Heart right ventricle (tissue), 16 donors: ENCODE measurements at regions of chr21 and their contacts with region 1.

Region 1: DNA sequence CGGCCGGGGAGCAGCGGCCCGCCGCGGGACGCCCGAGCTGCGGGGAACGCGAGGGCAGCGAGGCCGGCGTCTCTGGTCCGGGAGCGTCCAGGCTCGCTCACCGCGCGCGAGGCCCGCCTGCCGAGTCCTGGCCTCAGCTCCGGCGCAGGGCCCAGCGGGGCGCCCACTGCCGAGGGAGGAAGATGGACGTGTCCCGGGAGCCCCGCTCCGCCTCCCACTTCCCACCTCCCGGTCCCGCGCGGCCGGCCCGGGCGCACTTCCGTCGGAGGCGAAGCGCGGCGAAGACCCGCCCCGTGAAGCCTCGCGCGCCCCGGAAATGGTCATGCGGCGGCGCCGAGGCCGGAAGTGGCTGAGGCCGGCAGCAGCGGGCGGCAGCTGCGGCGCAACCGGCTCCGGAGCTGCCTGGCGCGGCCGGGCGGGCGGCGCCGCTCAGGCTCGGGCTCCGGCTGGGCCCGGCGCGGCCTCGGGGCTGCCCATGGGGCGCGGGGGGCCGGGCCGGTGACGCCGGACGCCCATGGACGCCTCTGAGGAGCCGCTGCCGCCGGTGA is at the start of gene TRAPPC10:
- DNase-seq: peak; percentile 85 to 88
- ATAC-seq: peak; percentile 91 to 95 (median 94)
- H3K4me3 ChIP-seq: peak within 1 kb of the TSS; percentile 80 to 99 (median 96)
- H3K27ac ChIP-seq: peak within 1 kb of the TSS; percentile 89 to 99 (median 98)
- H3K4me1 ChIP-seq: peaks cover 5 to 50% (median 30%) of the 10 kb centered on the region in 9 donors
- H3K27me3 ChIP-seq: no peaks in the 10 kb centered on the region
- CTCF ChIP-seq: no peak
- total RNA-seq, gene TRAPPC10: 18.7 to 26.2 (median 20.3) TPM

Region 2: DNA sequence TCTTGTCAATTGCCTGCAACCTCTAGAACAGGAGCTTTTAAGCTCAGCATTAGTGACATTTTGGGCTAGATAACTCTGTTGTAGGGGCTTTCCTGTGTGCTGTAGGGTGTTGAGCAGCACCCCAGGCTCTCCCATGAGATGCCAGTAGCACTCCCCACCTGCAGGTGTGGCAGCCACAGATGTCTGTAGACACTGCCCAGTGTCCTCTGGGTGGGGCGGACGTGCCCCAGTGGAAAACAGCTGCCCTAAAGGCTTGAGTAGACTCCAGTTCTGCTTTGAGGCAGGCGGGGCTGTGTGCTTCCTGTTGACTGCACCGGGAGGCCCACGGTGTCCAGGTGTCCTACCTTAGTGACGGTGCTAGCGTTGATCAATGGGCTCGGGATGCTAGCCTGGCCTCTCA is 78.3 kb after region 1 on chr21:
- intact Hi-C with region 1: loop called in 1 of 10 experiments (anchors 10 kb)
- DNase-seq: no peak
- ATAC-seq: no peak
- H3K4me3 ChIP-seq: no peak overlapping the region
- H3K27ac ChIP-seq: peak overlapping the region in 1 of 10 donors; percentile 89
- H3K4me1 ChIP-seq: peaks cover 16 to 53% (median 35%) of the 10 kb centered on the region in 9 donors
- H3K27me3 ChIP-seq: no peaks in the 10 kb centered on the region
- CTCF ChIP-seq: no peak

Region 3: DNA sequence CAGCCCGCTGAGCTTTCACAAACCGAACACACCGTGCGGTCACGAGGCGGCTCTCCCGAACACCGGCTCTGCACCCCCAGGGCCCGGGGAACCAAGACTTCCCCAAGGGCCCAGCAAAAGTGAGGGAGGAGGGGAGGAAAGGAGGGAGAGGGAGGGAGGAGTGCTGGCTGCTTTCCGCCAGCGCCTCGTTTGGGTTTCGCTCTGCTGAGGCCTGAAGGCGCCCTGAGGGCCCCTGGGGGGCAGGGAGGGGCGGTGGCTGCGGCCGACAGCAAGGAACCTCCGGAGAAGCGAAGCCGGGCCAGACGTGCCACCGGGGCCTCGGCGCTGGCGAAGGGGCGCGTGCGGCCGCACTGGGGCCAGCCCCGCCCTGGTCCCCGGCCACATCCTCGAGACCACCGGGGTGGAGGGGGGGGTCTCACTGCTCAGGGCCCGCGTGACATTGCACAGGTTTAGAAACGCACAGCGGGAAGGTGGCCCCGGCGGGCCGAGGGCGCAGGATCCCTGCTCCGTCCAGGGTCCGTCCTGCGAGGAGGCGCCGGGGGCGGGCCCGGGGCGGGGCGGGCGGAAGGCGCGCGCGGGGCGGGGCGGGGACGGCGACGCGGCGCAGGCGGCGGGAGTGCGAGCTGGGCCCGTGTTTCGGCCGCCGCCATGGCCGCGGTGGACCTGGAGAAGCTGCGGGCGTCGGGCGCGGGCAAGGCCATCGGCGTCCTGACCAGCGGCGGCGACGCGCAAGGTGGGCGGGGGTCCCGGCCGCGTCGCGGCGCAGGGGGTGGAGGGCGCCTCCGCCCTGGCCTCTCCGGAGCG is 287.6 kb after region 1 on chr21 and contains the start of gene PFKL:
- intact Hi-C with region 1: loop called in 1 of 10 experiments (anchors 10 kb)
- DNase-seq: peak; percentile 68 to 79
- ATAC-seq: peak; percentile 45 to 80 (median 53)
- H3K4me3 ChIP-seq: peak within 1 kb of the TSS; percentile 56 to 92 (median 78)
- H3K27ac ChIP-seq: peak within 1 kb of the TSS; percentile 83 to 98 (median 94)
- H3K4me1 ChIP-seq: peaks cover 42 to 73% (median 63%) of the 10 kb centered on the region in 9 donors
- H3K27me3 ChIP-seq: no peaks in the 10 kb centered on the region
- CTCF ChIP-seq: no peak
- total RNA-seq, gene PFKL: 34.7 to 84.4 (median 43.8) TPM

Region 4: DNA sequence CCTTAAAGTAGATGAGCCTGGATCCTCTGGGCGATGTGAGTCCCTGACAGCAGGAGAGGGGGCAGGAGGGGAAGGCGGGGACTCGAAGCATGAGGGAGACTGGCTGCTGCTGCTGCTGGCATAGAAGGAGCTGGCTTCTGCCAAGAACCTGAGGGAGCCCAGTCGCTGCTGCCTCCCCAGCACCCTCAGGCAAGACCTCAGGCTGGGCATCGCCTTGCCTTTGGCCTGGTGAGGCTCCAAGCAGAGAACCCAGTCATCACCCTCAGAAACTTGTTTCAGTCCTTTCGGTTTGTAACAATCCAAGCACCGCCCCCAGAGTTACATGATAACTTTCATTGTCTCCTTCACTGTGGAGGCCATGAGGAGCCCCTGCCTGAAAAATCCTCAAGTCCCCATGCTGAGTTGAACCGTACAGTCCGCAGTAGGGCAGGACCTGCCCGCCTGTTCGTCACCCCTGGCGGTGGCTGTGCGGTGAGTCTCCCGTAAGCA is 1236.9 kb after region 1 on chr21:
- intact Hi-C with region 1: no loop called
- DNase-seq: no peak
- ATAC-seq: peak; percentile 38 to 73 (median 58)
- H3K4me3 ChIP-seq: peak overlapping the region in 7 of 10 donors; percentile 17 to 39 (median 24)
- H3K27ac ChIP-seq: no peak overlapping the region
- H3K4me1 ChIP-seq: peaks cover 0 to 10% (median 8%) of the 10 kb centered on the region in 9 donors
- H3K27me3 ChIP-seq: peaks cover 0 to 32% (median 13%) of the 10 kb centered on the region in 7 donors
- CTCF ChIP-seq: no peak